H1 (cell line): ENCODE measurements at regions of chr20 and their contacts with region 1.

Region 1: GRCh38 chr20:41249406-41250281 is 67.9 kb downstream of the ZHX3 start:
- DNase-seq: peak; percentile 56 to 78
- H3K4me3 ChIP-seq: no peak overlapping the region; a peak in 2 of 8 replicates
- H3K27ac ChIP-seq: no peak overlapping the region
- H3K4me1 ChIP-seq: peaks cover 0 to 4% (median 3%) of the 10 kb centered on the region in 4 experiments; a peak in 6 of 7 replicates
- H3K27me3 ChIP-seq: peaks cover 0 to 10% (median 6%) of the 10 kb centered on the region in 4 experiments; a peak in 5 of 7 replicates
- CTCF ChIP-seq: peak; percentile 55 to 86 (median 61)
- EP300 ChIP-seq: no peak
- POLR2A ChIP-seq: no peak
- RAD21 ChIP-seq: peak; percentile 79 to 84

Region 2: DNA sequence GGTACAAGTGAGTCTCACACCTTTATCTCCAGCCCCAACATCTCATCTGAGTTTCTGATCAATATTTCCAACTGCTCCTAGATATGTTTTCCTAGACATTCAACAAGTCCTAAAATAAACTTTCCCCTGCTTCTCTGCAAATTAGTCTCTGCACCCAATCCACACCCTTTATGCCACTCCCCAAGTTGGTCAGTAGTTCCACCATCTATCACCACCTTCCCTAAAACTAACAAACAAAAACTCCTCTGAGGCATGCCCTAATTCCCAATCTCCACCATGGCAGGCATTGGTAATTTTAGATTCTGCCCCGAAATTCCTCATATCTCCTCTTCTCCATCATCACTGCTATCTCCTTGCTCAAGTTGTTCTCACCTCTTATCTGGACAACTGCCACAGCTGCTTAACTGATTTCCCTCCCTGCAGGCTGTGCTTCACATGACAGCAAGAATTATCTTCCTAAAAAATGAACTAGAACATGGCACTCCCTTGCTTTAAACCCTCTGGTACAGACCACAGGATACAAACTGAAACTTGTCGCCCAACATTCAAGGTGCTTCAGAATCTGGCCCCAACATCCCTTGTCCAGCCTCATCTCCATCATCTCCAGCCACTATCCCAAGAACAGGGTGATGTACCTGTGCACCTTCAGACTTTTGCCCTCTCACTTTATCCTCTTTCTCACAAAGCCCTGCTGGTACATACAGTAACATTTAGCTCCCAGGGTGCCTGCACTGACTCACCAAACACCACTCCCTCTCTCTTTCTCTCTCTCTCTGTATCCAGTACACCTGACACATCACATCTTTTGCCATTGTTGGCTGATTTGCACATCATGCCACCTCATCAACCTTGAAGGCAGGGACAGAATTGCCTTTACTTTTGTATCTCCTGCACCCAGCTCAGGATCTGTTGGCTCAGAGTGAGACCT is 12.4 kb after region 1 on chr20:
- CTCF ChIA-PET with region 1: interaction called, 10 read pairs
- POLR2A ChIA-PET with region 1: no interaction called
- DNase-seq: no peak
- H3K4me3 ChIP-seq: no peak overlapping the region
- H3K27ac ChIP-seq: no peak overlapping the region
- H3K4me1 ChIP-seq: no peaks in the 10 kb centered on the region
- H3K27me3 ChIP-seq: no peaks in the 10 kb centered on the region
- CTCF ChIP-seq: no peak
- EP300 ChIP-seq: no peak
- POLR2A ChIP-seq: no peak
- RAD21 ChIP-seq: no peak